ENCODE measurements at regions of chr13 and their contacts with region 1.

Region 1: GRCh38 chr13:99980201-99980823 is 1.3 kb upstream of the ZIC2 start:
- DNase-seq: peak; percentile 87
- ATAC-seq: peak; percentile 27
- H3K4me3 Mint-ChIP-seq: peak overlapping the region; percentile 76
- H3K27ac Mint-ChIP-seq: no peak overlapping the region
- H3K4me1 Mint-ChIP-seq: peaks cover 37% of the 10 kb centered on the region
- H3K27me3 Mint-ChIP-seq: peaks cover 38% of the 10 kb centered on the region
- CTCF ChIP-seq: no peak

Region 2: GRCh38 chr13:99686157-99686572 is 294.1 kb before region 1 on chr13:
- CTCF ChIA-PET with region 1: no interaction called
- POLR2A ChIA-PET with region 1: interaction called, 13 read pairs
- DNase-seq: peak; percentile 38
- ATAC-seq: peak; percentile 11
- H3K4me3 Mint-ChIP-seq: peak overlapping the region; percentile 62
- H3K27ac Mint-ChIP-seq: peak overlapping the region; percentile 100
- H3K4me1 Mint-ChIP-seq: peaks cover 80% of the 10 kb centered on the region
- H3K27me3 Mint-ChIP-seq: peaks cover 15% of the 10 kb centered on the region
- CTCF ChIP-seq: no peak

Region 3: DNA sequence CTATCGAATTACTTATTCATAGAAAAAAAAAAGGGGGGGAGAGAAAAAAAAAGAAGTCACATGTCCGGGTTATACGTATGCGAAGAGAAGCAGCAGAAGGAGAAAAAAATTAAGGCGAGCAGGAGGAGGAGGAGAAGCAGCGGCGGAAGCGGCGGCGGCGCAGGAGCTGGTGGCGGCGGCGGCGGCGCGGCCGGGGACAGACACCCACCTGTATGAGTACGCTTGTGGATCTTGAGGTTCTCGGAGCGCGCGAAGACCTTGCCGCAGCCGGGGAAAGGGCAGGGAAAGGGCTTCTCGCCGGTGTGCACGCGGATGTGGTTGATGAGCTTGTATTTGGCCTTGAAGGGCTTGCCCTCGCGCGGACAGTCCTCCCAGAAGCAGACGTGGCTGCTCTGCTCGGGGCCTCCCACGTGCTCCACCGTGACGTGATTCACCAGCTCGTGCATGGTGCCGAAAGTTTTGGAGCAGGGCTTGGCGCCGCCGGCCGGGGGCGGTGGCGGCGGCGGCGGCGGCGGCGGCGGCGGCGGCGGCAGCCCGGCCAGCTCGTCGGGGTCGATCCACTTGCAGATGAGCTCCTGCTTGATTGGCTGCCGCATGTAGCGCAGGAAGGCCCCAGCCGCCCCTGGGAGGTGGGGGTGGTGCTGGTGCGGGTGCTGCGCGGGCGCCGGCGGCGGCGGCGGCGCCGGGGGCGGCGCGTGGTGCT is 10.2 kb before region 1 on chr13:
- CTCF ChIA-PET with region 1: interaction called, 11 read pairs
- POLR2A ChIA-PET with region 1: interaction called, 67 read pairs
- DNase-seq: peak; percentile 81
- ATAC-seq: peak; percentile 19
- H3K4me3 Mint-ChIP-seq: peak overlapping the region; percentile 91
- H3K27ac Mint-ChIP-seq: peak overlapping the region; percentile 85
- H3K4me1 Mint-ChIP-seq: peaks cover 57% of the 10 kb centered on the region
- H3K27me3 Mint-ChIP-seq: no peaks in the 10 kb centered on the region; the same call in 1 of the 2 replicates
- CTCF ChIP-seq: no peak

Region 4: DNA sequence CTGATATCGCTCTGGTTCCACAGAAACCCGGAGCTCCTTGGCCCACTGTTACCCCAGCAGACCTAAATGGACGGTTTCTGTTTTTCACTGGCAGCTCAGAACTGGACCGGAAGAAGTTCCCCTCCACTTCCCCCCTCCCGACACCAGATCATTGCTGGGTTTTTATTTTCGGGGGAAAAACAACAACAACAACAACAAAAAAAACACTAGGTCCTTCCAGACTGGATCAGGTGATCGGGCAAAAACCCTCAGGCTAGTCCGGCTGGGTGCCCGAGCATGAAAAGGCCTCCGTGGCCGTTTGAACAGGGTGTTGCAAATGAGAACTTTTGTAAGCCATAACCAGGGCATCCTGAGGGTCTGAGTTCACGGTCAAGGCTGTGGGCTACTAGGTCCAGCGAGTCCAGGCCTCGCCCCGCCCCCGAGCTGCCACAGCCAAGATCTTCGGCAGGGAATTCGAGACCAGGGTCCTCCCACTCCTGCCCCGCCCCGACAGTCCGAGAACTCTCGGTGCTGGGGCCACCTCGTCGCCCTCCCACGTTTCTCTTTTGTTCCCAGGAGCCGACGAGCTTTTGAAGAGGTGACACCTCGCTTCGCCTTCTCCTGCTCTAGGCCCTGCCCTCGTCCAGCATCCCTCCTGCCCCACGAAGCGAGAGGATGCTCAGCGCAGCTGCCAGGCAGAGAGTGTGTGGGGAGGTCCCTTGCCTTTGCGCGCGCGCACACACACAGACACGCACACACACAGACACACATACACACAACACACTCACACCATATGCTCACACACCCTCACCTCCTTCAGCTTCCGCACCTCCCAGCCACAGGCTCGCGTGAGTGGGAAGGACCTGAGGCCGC is 10.0 kb after region 1 on chr13:
- CTCF ChIA-PET with region 1: interaction called, 9 read pairs
- POLR2A ChIA-PET with region 1: interaction called, 23 read pairs
- DNase-seq: peak; percentile 66
- ATAC-seq: peak; percentile 1
- H3K4me3 Mint-ChIP-seq: peak overlapping the region; percentile 71
- H3K27ac Mint-ChIP-seq: no peak overlapping the region; the same call in 1 of the 2 replicates
- H3K4me1 Mint-ChIP-seq: peaks cover 85% of the 10 kb centered on the region
- H3K27me3 Mint-ChIP-seq: peaks cover 74% of the 10 kb centered on the region
- CTCF ChIP-seq: no peak